Activated B cell treated with CpG ODN at 0.5 μM for 24 hours (primary cell): ENCODE measurements at regions of chr15 and their contacts with region 1.

Region 1: GRCh38 chr15:57647791-57648130 is 56.1 kb downstream of the MYZAP start:
- DNase-seq: no peak
- ATAC-seq: no peak
- H3K4me3 Mint-ChIP-seq: no peak overlapping the region
- H3K27ac Mint-ChIP-seq: no peak overlapping the region
- H3K4me1 Mint-ChIP-seq: peaks cover 15% of the 10 kb centered on the region
- H3K27me3 Mint-ChIP-seq: no peaks in the 10 kb centered on the region
- CTCF ChIP-seq: no peak

Region 2: DNA sequence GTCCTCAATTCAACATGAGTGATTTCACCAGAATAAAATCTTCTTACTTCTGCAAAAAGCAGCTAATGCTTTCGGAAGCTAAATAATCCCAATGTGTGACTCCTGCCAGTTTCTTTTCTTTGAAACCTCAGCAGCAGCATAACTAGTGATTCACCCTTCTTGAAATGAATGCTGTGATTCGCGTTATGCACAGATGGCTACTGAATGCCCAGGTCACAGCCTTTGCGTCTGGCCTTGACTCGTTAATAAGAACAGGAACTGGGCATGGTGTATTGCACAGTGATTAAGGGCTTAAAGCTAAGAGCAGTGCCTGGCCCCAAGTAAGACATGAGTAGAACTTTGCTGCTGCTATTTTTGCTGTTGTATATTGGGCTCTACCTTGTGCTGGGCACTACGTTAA is 252.5 kb before region 1 on chr15:
- CTCF ChIA-PET with region 1: no interaction called
- POLR2A ChIA-PET with region 1: no interaction called
- intact Hi-C with region 1: no loop called
- DNase-seq: no peak
- ATAC-seq: no peak
- H3K4me3 Mint-ChIP-seq: no peak overlapping the region
- H3K27ac Mint-ChIP-seq: no peak overlapping the region
- H3K4me1 Mint-ChIP-seq: no peaks in the 10 kb centered on the region
- H3K27me3 Mint-ChIP-seq: no peaks in the 10 kb centered on the region
- CTCF ChIP-seq: no peak

Region 3: DNA sequence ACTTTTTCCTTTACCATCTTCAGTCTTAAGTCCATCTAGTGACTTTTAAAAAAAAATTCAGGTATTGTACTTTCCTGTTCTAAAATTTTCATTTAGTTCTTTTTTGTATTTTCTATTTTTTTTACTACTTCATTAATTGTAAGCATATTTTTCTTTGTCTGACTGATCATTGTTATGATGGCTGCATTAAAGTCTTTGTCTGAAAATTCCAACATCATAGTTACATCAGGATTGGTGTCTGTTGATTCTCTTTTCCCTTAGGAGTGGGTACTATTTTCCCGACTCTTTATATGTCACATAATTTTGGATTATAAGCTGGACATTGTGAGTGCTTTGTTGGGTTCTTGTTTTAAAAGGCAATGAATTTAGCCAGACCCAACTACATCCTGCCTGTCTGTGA is 23.9 kb after region 1 on chr15:
- CTCF ChIA-PET with region 1: no interaction called
- POLR2A ChIA-PET with region 1: no interaction called
- intact Hi-C with region 1: no loop called
- DNase-seq: no peak
- ATAC-seq: no peak
- H3K4me3 Mint-ChIP-seq: no peak overlapping the region
- H3K27ac Mint-ChIP-seq: no peak overlapping the region
- H3K4me1 Mint-ChIP-seq: no peaks in the 10 kb centered on the region
- H3K27me3 Mint-ChIP-seq: peaks cover 14% of the 10 kb centered on the region
- CTCF ChIP-seq: no peak

Region 4: GRCh38 chr15:57697588-57697987 is 49.8 kb after region 1 on chr15:
- CTCF ChIA-PET with region 1: no interaction called
- POLR2A ChIA-PET with region 1: no interaction called
- intact Hi-C with region 1: loop called (anchors 5 kb)
- DNase-seq: no peak
- ATAC-seq: no peak
- H3K4me3 Mint-ChIP-seq: no peak overlapping the region
- H3K27ac Mint-ChIP-seq: no peak overlapping the region
- H3K4me1 Mint-ChIP-seq: no peaks in the 10 kb centered on the region
- H3K27me3 Mint-ChIP-seq: peaks cover 57% of the 10 kb centered on the region
- CTCF ChIP-seq: no peak